PC-9 (cell line): ENCODE measurements at regions of chr10 and their contacts with region 1.

Region 1: GRCh38 chr10:14093730-14094484 is 236.8 kb downstream of the FRMD4A start:
- DNase-seq: peak in 1 of 2 experiments; percentile 35
- H3K4me3 ChIP-seq: no peak overlapping the region
- H3K27ac ChIP-seq: no peak overlapping the region
- H3K4me1 ChIP-seq: peaks cover 6% of the 10 kb centered on the region; the same call in 1 of the 2 replicates
- H3K27me3 ChIP-seq: no peaks in the 10 kb centered on the region
- CTCF ChIP-seq: peak; percentile 55

Region 2: DNA sequence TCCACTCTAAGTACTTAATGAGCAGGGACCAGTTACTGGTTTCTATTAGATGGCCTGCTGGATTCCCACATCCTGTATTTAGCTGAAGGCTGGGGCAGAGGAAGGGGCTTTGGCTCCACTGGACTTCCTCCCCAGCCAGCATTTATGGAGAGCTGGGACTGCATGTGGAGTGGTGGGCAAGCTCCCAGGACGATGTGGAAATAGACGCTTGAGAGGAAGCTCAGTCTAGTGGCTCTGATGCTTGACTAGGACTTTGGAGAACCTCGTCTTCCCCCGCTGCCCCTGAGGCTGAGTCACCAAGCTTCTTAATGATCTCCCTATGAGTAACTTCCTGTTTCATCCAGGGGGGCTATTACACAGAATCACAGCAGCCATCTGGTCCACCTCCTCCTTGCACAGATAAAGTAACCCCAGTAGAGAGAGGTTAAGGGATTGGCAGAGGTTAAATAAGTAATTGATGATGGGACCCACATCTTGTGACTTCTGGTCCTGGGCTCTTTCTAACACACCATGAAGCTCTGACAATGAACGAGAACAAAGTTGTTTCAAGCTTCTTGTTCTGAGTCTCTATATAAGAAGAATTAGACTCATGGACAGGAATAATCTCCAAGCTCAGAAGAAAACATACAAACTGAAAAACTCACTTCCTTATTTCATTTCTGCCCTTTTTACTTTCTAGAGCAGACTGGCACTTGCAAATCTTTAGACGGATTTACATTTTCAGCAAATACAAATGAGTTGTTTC is 380.9 kb before region 1 on chr10:
- CTCF ChIA-PET with region 1: no interaction called
- POLR2A ChIA-PET with region 1: no interaction called
- intact Hi-C with region 1: no loop called
- DNase-seq: peak; percentile 40 to 72
- H3K4me3 ChIP-seq: no peak overlapping the region
- H3K27ac ChIP-seq: peak overlapping the region; percentile 59
- H3K4me1 ChIP-seq: peaks cover 39% of the 10 kb centered on the region
- H3K27me3 ChIP-seq: no peaks in the 10 kb centered on the region
- CTCF ChIP-seq: no peak

Region 3: DNA sequence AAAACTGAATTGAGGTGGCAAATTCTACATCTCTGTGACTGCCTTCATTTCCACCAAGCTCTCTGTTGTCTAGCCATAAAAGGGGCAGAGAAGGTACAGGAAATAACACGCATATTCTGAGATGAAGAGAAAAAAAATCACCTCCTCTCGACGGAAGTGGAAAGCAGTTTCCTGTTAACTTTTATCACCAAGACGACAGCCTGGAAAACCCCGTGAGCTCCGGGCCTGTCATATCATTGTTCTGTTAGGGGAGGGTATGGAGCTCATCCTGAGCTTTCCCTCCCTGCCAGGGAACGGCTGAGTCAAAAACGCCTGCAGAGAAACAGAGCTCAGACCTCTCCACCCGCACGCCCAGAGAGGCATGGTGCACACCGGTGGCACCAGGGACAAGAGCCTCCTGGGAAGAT is 306.9 kb before region 1 on chr10:
- CTCF ChIA-PET with region 1: interaction called, 3 read pairs
- POLR2A ChIA-PET with region 1: no interaction called
- intact Hi-C with region 1: loop called (anchors 1 kb)
- DNase-seq: no peak
- H3K4me3 ChIP-seq: no peak overlapping the region
- H3K27ac ChIP-seq: no peak overlapping the region
- H3K4me1 ChIP-seq: peaks cover 15% of the 10 kb centered on the region
- H3K27me3 ChIP-seq: no peaks in the 10 kb centered on the region
- CTCF ChIP-seq: no peak